Psoas muscle (tissue), 8 donors: ENCODE measurements at regions of chr11 and their contacts with region 1.

Region 1: GRCh38 chr11:112121981-112122615 is 35.4 kb downstream of the SDHD start:
- DNase-seq: no peak
- ATAC-seq: no peak
- H3K4me3 ChIP-seq: no peak overlapping the region
- H3K27ac ChIP-seq: no peak overlapping the region
- H3K4me1 ChIP-seq: peaks cover 16% of the 10 kb centered on the region
- H3K27me3 ChIP-seq: no peaks in the 10 kb centered on the region
- CTCF ChIP-seq: no peak

Region 2: GRCh38 chr11:112143597-112143996 is 21.5 kb after region 1 on chr11:
- intact Hi-C with region 1: no loop called
- DNase-seq: no peak
- ATAC-seq: no peak
- H3K4me3 ChIP-seq: no peak overlapping the region
- H3K27ac ChIP-seq: no peak overlapping the region
- H3K4me1 ChIP-seq: no peaks in the 10 kb centered on the region
- H3K27me3 ChIP-seq: no peaks in the 10 kb centered on the region
- CTCF ChIP-seq: no peak

Region 3: GRCh38 chr11:112163875-112164685 is 42.0 kb after region 1 on chr11 and contains the start of gene IL18:
- intact Hi-C with region 1: loop called in 1 of 2 experiments (anchors 5 kb)
- DNase-seq: peak; percentile 47 to 79
- ATAC-seq: peak; percentile 81 to 93 (median 90)
- H3K4me3 ChIP-seq: peak within 1 kb of the TSS; percentile 69
- H3K27ac ChIP-seq: peak within 1 kb of the TSS; percentile 82
- H3K4me1 ChIP-seq: peaks cover 27% of the 10 kb centered on the region
- H3K27me3 ChIP-seq: no peaks in the 10 kb centered on the region
- CTCF ChIP-seq: no peak
- total RNA-seq, gene IL18: 3.0 to 66.4 (median 10.4) TPM

Region 4: GRCh38 chr11:112174789-112175598 is 52.9 kb after region 1 on chr11 and contains the start of gene BCO2:
- intact Hi-C with region 1: no loop called
- DNase-seq: peak; percentile 81 to 90
- ATAC-seq: peak; percentile 88 to 94 (median 92)
- H3K4me3 ChIP-seq: peak within 1 kb of the TSS; percentile 65
- H3K27ac ChIP-seq: peak within 1 kb of the TSS; percentile 85
- H3K4me1 ChIP-seq: peaks cover 35% of the 10 kb centered on the region
- H3K27me3 ChIP-seq: no peaks in the 10 kb centered on the region
- CTCF ChIP-seq: peak; percentile 85
- total RNA-seq, gene BCO2: 4.7 to 42.4 (median 19.2) TPM

Region 5: DNA sequence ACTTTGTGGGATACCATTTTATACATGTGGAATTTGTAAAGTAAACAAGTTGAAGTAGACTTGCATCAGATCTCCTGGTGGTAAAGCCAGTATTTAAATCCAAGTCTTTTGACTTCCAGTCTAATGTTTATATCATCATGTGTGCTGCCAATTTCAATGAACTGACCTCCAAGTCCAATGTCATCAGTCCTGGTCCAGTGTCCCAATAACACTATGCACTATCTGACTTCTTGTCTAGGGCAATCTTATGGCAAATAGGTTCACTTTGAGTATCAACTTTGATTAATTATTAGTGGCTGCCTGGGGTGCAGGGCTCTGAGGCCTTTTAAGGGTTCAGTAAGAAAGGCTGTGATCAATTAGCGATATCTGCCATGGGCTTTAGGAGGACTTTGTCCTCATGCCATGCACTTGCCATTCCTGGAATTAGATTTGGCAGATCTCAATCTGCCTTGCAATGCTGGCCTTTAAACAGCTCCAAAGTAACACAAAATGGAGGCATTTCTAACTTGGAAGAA is 94.5 kb after region 1 on chr11:
- intact Hi-C with region 1: no loop called
- DNase-seq: no peak
- ATAC-seq: no peak
- H3K4me3 ChIP-seq: no peak overlapping the region
- H3K27ac ChIP-seq: no peak overlapping the region
- H3K4me1 ChIP-seq: no peaks in the 10 kb centered on the region
- H3K27me3 ChIP-seq: no peaks in the 10 kb centered on the region
- CTCF ChIP-seq: no peak